OCI-LY7 (cell line): ENCODE measurements at regions of chr1 and their contacts with region 1.

Region 1: DNA sequence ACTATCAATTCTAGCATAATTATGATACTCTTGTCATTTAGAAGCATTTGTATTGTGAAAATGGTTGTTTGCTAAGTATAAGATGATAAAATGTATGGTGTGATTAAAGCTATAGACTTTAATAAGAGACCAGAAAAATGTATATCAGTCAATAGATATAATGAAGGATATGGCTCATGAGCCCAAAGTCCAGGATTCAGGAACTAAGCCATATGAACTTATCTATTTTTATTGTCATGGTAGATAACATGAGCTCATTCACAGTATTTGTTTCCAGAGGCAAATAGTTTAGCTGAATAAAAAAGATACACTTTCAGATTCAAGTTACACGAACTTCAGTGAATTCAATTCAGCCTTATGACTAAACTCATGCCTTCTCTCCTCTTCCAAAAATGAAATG is 32.7 kb downstream of the PRDX6 start:
- DNase-seq: no peak
- H3K4me3 ChIP-seq: no peak overlapping the region
- H3K27ac ChIP-seq: no peak overlapping the region
- H3K4me1 ChIP-seq: no peaks in the 10 kb centered on the region
- CTCF ChIP-seq: no peak

Region 2: GRCh38 chr1:173562813-173563212 is 53.0 kb after region 1 on chr1:
- CTCF ChIA-PET with region 1: no interaction called
- POLR2A ChIA-PET with region 1: no interaction called
- intact Hi-C with region 1: loop called (anchors 5 kb)
- DNase-seq: no peak
- H3K4me3 ChIP-seq: no peak overlapping the region
- H3K27ac ChIP-seq: no peak overlapping the region
- H3K4me1 ChIP-seq: no peaks in the 10 kb centered on the region
- CTCF ChIP-seq: no peak

Region 3: GRCh38 chr1:173603056-173603620 is 93.3 kb after region 1 on chr1 and contains the start of gene SLC9C2:
- CTCF ChIA-PET with region 1: no interaction called
- POLR2A ChIA-PET with region 1: no interaction called
- intact Hi-C with region 1: no loop called
- DNase-seq: peak; percentile 3
- H3K4me3 ChIP-seq: no peak within 1 kb of the TSS
- H3K27ac ChIP-seq: no peak within 1 kb of the TSS
- H3K4me1 ChIP-seq: no peaks in the 10 kb centered on the region
- CTCF ChIP-seq: no peak
- total RNA-seq, gene SLC9C2: not detected in 2 replicates